ENCODE measurements at regions of chr5 and their contacts with region 1.

Region 1: GRCh38 chr5:80960531-80961375 is 590 bp downstream of the RASGRF2 start:
- DNase-seq: peak; percentile 44 to 66 (median 53)
- ATAC-seq: peak in 3 of 4 donors; percentile 69 to 74 (median 73)
- H3K4me3 ChIP-seq: peak overlapping the region; percentile 46 to 82 (median 67)
- H3K27ac ChIP-seq: peak overlapping the region; percentile 61 to 94 (median 86)
- H3K4me1 ChIP-seq: peaks cover 0 to 21% (median 1%) of the 10 kb centered on the region in 12 donors
- H3K27me3 ChIP-seq: peaks cover 0 to 42% (median 25%) of the 10 kb centered on the region in 9 donors
- CTCF ChIP-seq: peak in 8 of 12 donors; percentile 15 to 49 (median 36)
- POLR2A ChIP-seq: no peak

Region 2: DNA sequence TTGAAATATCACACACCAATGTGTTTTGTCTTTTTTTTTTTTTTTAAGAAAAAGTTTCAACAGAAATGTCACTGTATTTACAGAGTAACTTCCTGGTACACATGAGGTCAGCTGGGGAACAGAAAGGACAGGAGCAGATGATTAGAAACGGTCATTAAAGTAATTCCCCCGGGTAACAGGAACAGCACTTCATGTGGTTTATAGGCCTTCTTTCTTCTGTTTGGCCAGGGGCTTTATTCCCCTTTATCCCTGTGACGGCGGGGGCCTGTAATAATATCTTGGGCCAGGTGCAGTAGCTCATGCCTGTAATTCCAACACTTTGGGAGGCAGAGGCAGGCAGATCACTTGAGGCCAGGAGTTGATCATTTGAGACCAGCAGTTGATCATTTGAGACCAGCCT is 336.8 kb before region 1 on chr5:
- intact Hi-C with region 1: no loop called
- DNase-seq: no peak
- ATAC-seq: no peak
- H3K4me3 ChIP-seq: no peak overlapping the region
- H3K27ac ChIP-seq: peak overlapping the region in 1 of 12 donors; percentile 21
- H3K4me1 ChIP-seq: no peaks in the 10 kb centered on the region
- H3K27me3 ChIP-seq: no peaks in the 10 kb centered on the region
- CTCF ChIP-seq: no peak
- POLR2A ChIP-seq: no peak

Region 3: DNA sequence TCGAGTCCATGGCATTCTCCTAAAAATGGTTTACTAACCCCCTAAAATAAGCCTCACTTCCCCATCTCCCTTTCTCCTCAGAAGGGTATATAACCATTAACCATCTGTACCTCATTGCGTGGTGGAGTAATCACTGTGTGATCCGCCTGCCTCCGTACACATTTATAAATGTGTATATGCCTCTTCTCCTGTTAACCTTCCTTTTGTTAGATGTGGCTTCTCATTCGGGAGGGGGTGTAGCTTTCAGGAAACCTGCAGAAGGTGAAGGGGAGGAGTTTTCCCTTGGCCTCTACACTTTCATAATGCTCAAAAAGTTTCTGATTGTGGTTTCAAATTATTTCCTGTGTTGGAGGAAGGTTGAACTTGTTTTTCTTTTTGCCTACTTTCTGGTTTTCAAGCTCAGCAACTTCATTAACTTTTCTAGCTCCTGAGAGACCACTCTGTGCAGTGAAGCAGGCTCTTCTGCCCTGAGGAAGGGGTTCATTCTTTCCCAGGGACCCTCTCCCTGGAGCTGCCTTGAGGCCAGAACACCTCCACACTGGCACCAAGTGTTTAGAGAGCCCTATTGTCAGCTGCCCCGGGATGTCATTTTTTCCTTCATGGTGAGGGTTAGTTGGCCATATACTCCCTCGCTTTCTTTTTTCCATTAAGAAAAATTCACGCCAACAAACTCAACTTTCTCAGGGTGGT is 46.3 kb after region 1 on chr5:
- intact Hi-C with region 1: loop called in 2 of 10 experiments (anchors 5 kb)
- DNase-seq: no peak
- ATAC-seq: no peak
- H3K4me3 ChIP-seq: no peak overlapping the region
- H3K27ac ChIP-seq: peak overlapping the region in 8 of 12 donors; percentile 38 to 82 (median 58)
- H3K4me1 ChIP-seq: peaks cover 0 to 39% (median 6%) of the 10 kb centered on the region in 12 donors
- H3K27me3 ChIP-seq: no peaks in the 10 kb centered on the region
- CTCF ChIP-seq: no peak
- POLR2A ChIP-seq: no peak

Region 4: DNA sequence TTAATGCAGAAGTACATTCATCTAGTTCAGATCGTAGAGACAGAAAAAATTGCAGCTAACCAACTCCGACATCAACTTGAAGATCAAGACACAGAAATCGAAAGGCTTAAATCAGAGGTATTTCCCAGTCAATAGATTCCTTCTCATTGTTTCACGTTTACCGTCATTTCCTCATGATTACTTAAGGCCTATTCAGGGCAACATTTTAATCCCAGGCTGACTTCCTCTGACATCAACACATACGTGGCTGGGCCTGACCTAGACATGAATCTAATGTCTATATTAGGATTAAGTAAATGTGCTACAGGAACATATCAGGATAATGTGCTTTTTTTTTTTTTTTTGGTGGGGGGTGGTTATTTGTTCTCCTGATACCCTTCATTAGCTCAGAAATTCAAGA is 107.3 kb after region 1 on chr5:
- intact Hi-C with region 1: loop called in 4 of 10 experiments (anchors 5 to 10 kb)
- DNase-seq: peak in 2 of 5 donors; percentile 34 to 36
- ATAC-seq: peak; percentile 47 to 94 (median 58)
- H3K4me3 ChIP-seq: no peak overlapping the region
- H3K27ac ChIP-seq: peak overlapping the region in 11 of 12 donors; percentile 31 to 91 (median 61)
- H3K4me1 ChIP-seq: peaks cover 0 to 11% (median 0%) of the 10 kb centered on the region in 12 donors
- H3K27me3 ChIP-seq: no peaks in the 10 kb centered on the region
- CTCF ChIP-seq: no peak
- POLR2A ChIP-seq: no peak

Region 5: DNA sequence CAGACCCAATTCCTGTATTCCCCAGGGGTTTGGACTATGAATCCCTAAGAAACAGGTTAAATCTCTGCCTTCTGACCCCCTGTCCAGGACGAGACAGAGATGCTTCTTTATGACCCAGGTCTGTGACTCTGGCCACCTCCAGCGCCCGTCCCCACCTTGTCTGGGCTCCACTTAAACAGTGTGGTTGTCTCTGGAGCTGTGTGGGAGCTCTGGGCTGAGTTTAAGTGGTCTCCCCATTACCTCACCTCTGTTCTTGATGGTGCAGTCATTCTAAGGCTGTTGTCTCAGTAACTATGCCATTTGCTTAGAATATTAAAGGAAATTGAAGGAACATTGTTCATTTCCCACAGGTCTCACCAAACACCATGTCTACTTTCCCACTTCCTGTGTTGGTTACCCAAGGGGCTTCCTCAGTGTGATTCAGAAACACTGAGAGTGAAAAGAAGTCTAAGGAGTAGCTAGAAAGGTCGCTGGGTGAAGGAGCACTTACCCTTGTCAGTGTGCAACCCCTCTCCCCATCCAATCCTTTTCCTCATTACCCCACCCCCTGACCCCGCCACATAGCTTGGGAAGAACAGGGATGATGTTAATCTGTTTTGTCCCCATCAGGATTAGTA is 144.6 kb after region 1 on chr5:
- intact Hi-C with region 1: loop called in 5 of 10 experiments (anchors 5 to 10 kb)
- DNase-seq: no peak
- ATAC-seq: no peak
- H3K4me3 ChIP-seq: no peak overlapping the region
- H3K27ac ChIP-seq: no peak overlapping the region
- H3K4me1 ChIP-seq: peaks cover 0 to 10% (median 0%) of the 10 kb centered on the region in 12 donors
- H3K27me3 ChIP-seq: no peaks in the 10 kb centered on the region
- CTCF ChIP-seq: no peak
- POLR2A ChIP-seq: no peak

Region 6: DNA sequence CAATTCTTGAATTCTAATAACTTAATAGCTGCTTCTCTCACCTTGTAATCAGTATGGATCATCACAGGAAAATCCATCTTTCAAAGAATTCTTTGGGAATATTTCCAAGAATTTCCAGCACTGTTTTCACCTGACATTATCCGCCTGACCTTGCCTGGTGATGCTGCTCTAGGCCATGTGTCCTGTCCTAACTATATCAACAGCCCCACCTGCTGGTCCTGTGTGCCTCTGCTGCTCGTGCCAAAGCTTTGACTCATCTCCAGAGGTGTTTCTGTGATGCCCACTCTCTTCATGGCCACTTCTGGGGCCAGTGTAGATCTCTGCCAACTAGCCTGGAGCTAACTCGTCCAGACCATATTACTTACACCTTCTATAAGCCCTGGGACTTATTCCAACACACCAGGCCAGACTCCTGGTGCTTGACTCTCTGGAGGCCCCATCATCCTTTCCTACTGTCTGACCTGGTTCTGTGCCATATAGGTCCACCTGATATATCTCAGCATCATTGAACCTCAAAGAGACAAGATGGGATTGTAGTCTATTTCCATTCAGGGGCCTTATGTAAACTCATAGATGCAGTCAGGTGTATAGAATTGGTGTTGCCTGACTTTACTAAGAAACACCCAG is 204.9 kb after region 1 on chr5:
- intact Hi-C with region 1: loop called in 4 of 10 experiments (anchors 5 to 10 kb)
- DNase-seq: peak in 4 of 5 donors; percentile 43 to 65 (median 44)
- ATAC-seq: peak in 3 of 4 donors; percentile 75 to 82 (median 77)
- H3K4me3 ChIP-seq: no peak overlapping the region
- H3K27ac ChIP-seq: no peak overlapping the region
- H3K4me1 ChIP-seq: peaks cover 0 to 6% (median 0%) of the 10 kb centered on the region in 12 donors
- H3K27me3 ChIP-seq: no peaks in the 10 kb centered on the region
- CTCF ChIP-seq: peak; percentile 37 to 71 (median 54)
- POLR2A ChIP-seq: no peak

Measured in heart left ventricle (tissue), 16 donors.